Keratinocyte (primary cell): ENCODE measurements at regions of chr9 and their contacts with region 1.

Region 1: GRCh38 chr9:70609542-70610286 is 195.3 kb upstream of the KLF9 start:
- DNase-seq: no peak
- H3K4me3 ChIP-seq: no peak overlapping the region
- H3K27ac ChIP-seq: no peak overlapping the region
- H3K4me1 ChIP-seq: no peaks in the 10 kb centered on the region
- H3K27me3 ChIP-seq: no peaks in the 10 kb centered on the region
- CTCF ChIP-seq: no peak

Region 2: GRCh38 chr9:70392189-70392588 is 217.5 kb before region 1 on chr9:
- dilution Hi-C with region 1: loop called (anchors 5 kb)
- DNase-seq: no peak
- H3K4me3 ChIP-seq: no peak overlapping the region
- H3K27ac ChIP-seq: no peak overlapping the region
- H3K4me1 ChIP-seq: no peaks in the 10 kb centered on the region
- H3K27me3 ChIP-seq: no peaks in the 10 kb centered on the region
- CTCF ChIP-seq: peak in 2 of 3 experiments; percentile 33 to 39